ENCODE measurements at regions of chr1 and their contacts with region 1.

Region 1: GRCh38 chr1:167797015-167797414 is 75.2 kb downstream of the MPZL1 start:
- ATAC-seq: peak; percentile 80 to 99 (median 98)
- H3K4me3 ChIP-seq: no peak overlapping the region
- H3K27ac ChIP-seq: no peak overlapping the region
- H3K4me1 ChIP-seq: peaks cover 4 to 5% of the 10 kb centered on the region in 2 donors

Region 2: GRCh38 chr1:167301355-167301754 is 495.7 kb before region 1 on chr1:
- in situ Hi-C with region 1: no loop called
- ATAC-seq: peak in 3 of 8 experiments; percentile 49 to 77 (median 58)
- H3K4me3 ChIP-seq: no peak overlapping the region
- H3K27ac ChIP-seq: no peak overlapping the region
- H3K4me1 ChIP-seq: no peaks in the 10 kb centered on the region

Region 3: DNA sequence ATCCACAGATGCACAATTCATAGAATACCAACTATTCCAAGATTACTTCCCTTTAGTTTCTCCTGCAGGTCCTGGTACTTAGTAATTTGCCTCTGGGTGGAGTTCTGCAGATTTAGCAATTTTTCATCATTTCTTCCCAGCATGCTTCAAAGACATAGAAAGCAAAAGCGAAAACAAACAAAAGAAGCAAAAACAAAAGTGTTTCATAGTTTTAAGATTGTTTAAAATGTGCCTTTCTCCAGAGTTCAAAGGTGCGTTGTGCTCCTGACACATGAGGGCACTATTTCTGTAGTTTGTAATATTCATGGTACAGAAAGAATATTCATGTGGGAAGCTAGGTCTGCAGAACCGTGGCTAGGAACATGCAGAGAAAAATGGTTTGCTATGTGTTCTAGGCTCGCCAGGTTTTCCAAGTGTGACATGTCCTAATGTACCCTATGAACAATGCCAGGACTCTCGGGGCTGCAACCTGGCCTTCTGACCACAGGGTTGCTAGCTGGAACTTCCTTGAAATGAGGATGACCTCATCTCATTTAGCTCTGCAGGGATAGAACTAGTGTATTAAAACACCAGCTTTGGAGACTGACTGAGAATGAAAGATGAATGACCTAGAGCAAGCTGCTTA is 196.9 kb before region 1 on chr1:
- in situ Hi-C with region 1: loop called in 1 of 9 experiments (anchors 25 kb)
- ATAC-seq: peak; percentile 56 to 92 (median 68)
- H3K4me3 ChIP-seq: no peak overlapping the region
- H3K27ac ChIP-seq: no peak overlapping the region
- H3K4me1 ChIP-seq: no peaks in the 10 kb centered on the region

Region 4: DNA sequence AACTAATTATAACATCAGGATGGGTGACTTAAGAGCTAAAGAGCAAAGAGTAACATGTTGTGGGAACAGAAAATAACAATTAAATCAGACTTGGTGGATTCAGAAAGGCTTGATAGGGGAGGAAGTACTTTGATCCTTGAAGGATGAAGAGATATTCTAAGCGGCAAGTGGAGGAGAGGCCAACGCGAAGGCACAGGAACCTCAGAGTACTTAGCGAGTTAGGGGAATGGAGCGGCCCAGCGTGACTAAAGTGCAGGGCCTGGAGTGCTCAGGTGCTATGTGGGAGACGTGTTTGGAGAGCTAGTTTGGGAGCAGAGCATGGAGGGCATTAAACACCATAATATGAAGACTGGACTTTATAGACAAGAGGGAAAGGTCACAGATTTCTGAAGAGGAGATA is 52.7 kb after region 1 on chr1:
- in situ Hi-C with region 1: no loop called
- ATAC-seq: no peak
- H3K4me3 ChIP-seq: no peak overlapping the region
- H3K27ac ChIP-seq: no peak overlapping the region
- H3K4me1 ChIP-seq: no peaks in the 10 kb centered on the region

Measured in motor neuron (in vitro differentiated cells).